Common myeloid progenitor, CD34-positive (primary cell): ENCODE measurements at regions of chr10 and their contacts with region 1.

Region 1: DNA sequence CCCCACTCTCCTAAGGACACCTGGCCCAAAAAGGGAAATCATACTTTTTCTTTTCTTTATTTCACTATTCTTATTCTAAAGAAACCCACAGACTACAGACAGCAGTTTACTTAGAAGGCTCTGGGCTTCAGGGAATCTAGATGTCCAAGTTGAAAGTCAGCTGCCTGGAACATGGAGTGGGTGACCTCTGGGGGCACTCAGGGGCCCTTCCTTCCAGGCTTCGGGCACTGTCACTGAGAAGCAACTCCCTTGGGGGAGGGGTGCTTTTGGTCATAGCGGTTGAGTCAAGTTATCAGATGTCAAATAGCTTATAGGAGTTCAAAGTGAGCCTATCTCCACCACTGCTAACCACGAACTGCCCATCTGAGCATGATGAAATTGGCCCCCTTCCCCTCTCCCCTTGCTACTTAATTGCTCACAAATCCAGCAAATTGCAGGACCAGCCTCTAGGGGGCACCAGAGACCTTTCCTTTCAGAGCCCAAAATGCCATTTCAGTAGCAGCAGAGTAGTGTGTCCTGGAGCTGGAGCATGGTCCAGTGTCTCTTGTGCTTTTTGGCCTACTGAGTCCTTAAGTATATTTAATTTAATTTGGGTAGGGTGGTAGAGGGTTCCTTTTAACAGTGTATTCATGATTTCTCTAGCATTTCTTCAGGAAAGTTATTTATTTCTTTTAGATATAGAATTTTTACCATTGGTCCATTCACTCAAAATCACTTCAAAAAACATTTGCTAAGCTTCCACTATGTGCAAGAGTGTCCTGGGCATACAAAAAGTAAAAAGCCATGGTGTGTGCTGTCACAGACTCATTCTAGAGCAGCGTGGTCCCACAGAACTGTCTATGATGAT is 463.8 kb downstream of the KCNMA1 start:
- DNase-seq: peak; percentile 77 to 90 (median 84)
- H3K4me3 ChIP-seq: no peak overlapping the region
- H3K27ac ChIP-seq: no peak overlapping the region
- H3K4me1 ChIP-seq: peaks cover 0 to 9% (median 2%) of the 10 kb centered on the region in 4 experiments
- H3K27me3 ChIP-seq: peaks cover 0 to 5% (median 0%) of the 10 kb centered on the region in 5 experiments

Region 2: GRCh38 chr10:77152256-77152655 is 21.6 kb before region 1 on chr10:
- CTCF ChIA-PET with region 1: no interaction called
- POLR2A ChIA-PET with region 1: no interaction called
- DNase-seq: no peak
- H3K4me3 ChIP-seq: no peak overlapping the region
- H3K27ac ChIP-seq: no peak overlapping the region
- H3K4me1 ChIP-seq: no peaks in the 10 kb centered on the region
- H3K27me3 ChIP-seq: peaks cover 0 to 2% (median 0%) of the 10 kb centered on the region in 5 experiments

Region 3: DNA sequence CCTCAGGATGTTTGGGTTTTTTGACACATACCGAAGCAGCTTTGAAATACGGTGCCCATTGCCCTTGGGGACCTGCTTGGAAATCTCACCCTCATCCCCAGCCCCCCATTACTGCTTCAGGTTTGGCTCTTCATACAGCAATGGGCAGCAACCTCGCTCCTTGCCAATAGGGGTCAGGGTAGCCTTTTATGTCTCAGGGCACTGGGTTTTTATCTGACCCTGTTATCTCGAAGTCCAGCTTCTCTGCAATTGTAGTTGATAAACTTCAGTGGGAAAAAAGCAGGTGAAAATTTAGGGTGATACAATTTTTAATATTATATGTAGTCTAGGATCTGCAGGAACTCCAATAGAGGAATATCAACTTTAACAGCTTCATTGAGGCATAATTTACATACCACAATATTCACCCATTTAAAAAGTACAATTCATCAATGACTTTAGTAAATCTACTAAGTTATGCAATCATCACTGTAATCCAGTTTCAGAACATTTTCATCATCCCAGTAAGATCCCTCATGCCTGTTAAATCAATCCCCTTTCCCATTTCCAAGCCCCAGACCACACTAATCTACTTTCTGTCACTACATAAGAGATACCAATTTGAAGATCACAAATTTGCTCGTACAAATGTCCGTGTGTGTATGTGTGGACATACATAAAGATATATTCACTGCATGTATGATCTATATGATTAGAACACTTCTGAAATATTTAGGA is 77.6 kb after region 1 on chr10:
- CTCF ChIA-PET with region 1: interaction called, 12 read pairs
- POLR2A ChIA-PET with region 1: no interaction called
- DNase-seq: peak; percentile 46 to 55 (median 51)
- H3K4me3 ChIP-seq: no peak overlapping the region
- H3K27ac ChIP-seq: no peak overlapping the region
- H3K4me1 ChIP-seq: peaks cover 0 to 5% (median 0%) of the 10 kb centered on the region in 4 experiments
- H3K27me3 ChIP-seq: peaks cover 0 to 2% (median 0%) of the 10 kb centered on the region in 5 experiments

Region 4: GRCh38 chr10:77641788-77642397 is 468.1 kb after region 1 on chr10:
- CTCF ChIA-PET with region 1: interaction called, 339 read pairs
- POLR2A ChIA-PET with region 1: no interaction called
- DNase-seq: peak; percentile 69 to 79 (median 71)
- H3K4me3 ChIP-seq: no peak overlapping the region
- H3K27ac ChIP-seq: no peak overlapping the region
- H3K4me1 ChIP-seq: peaks cover 0 to 16% (median 9%) of the 10 kb centered on the region in 4 experiments
- H3K27me3 ChIP-seq: peaks cover 7 to 48% (median 23%) of the 10 kb centered on the region in 5 experiments

Region 5: DNA sequence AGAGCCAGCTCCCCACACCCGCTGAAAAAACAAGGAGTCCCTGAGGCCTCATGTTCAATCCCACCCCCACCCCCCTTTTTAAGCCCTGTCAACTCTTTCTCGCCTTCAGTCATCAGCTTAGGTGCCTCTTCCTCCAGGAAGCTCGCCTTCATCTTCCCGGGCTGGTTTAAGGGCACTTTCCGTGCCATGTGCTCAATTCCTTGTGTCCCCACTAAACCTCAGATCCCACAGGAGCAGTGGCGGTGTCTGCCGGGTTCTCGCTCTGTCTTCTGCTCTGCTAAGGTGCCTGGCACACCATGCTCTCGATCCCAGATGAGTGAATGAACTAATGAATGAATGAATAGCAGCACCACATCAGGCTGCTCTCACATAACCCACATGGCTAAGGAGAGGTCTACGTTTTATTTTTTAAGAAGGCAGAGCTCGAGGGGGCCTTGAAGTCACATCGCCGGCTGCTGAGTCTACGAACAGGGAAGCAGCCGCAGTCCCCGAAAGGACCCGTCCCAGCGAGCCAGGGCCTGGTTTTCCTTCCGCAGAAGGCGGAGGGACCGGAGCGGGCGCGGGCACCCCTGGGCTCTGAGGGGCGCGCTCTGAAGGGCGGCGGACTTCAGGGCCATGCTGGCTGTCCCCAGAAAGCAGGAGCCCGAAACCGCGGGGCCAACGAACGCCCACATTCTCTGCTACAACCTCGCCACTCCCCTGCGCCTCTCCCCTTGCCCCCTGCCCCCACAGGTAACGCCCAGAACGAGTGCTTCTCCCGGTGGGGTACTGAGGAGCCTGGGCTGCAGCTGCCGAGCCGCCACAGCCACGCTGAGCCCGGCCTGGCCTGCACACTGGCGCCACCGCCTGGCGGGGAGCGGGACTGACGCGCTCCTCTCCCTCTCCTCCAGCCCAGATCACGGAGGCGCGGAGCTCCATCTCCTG is 537.2 kb after region 1 on chr10:
- CTCF ChIA-PET with region 1: interaction called, 42 read pairs
- POLR2A ChIA-PET with region 1: no interaction called
- DNase-seq: peak; percentile 49 to 75 (median 74)
- H3K4me3 ChIP-seq: peak overlapping the region in 6 of 7 experiments; percentile 37 to 73 (median 60)
- H3K27ac ChIP-seq: no peak overlapping the region
- H3K4me1 ChIP-seq: peaks cover 0 to 7% (median 6%) of the 10 kb centered on the region in 4 experiments
- H3K27me3 ChIP-seq: peaks cover 0 to 49% (median 13%) of the 10 kb centered on the region in 5 experiments